ENCODE measurements at regions of chr3 and their contacts with region 1.

Region 1: GRCh38 chr3:132256989-132257388 is 60.2 kb upstream of the ACP3 start:
- DNase-seq: no peak
- ATAC-seq: no peak

Region 2: GRCh38 chr3:131960324-131960723 is 296.7 kb before region 1 on chr3:
- intact Hi-C with region 1: no loop called
- DNase-seq: no peak
- ATAC-seq: no peak

Region 3: GRCh38 chr3:132343018-132343612 is 86.1 kb after region 1 on chr3:
- intact Hi-C with region 1: loop called (anchors 2 kb)
- DNase-seq: no peak
- ATAC-seq: peak; percentile 61

Region 4: DNA sequence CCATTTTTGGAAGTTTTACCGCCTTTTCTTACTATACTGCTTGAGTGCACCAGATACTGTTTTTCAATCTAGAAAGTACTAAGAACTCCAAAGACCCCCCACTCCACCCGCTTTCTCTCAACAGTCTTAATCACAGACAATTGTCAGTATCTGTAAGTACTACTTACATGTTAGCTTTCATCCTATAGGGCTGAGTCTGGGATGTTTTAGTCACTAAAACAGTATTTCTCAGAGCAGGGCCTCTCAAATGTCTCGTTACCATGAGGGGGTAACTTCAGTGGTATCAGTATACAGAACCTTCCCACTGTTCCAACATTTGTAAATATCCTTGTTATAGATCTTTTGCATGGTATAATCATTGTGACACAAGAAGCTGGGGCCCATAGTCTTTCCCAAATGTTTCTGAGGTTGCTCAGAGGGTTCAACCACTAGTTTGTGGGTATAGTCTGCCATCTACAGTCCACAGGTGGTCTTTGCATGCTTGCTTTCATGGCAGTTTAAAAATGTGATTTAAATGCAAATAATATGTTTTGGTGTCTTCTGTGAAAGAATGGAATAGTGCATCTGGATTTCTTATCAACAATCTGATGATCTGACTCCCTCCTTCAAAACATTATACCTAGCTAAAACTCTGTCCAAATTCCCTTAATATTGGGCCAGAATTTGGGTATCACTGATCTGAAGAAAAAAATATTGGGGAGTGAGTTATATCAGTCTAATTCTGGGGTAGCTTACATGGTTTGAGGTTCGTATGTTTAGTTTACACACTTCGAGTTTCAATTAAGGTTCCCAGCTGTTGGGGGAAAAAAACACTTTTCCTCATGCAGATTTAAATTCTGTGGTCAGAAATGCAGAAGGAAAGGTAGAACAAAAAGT is 142.3 kb after region 1 on chr3:
- intact Hi-C with region 1: loop called (anchors 5 kb)
- DNase-seq: no peak
- ATAC-seq: peak; percentile 56